ENCODE measurements at regions of chr17 and their contacts with region 1.

Region 1: GRCh38 chr17:6701719-6702118 is 11.4 kb downstream of the SLC13A5 start:
- DNase-seq: peak; percentile 38 to 51 (median 51)
- H3K4me3 ChIP-seq: peak overlapping the region in 1 of 7 experiments; percentile 16
- H3K27ac ChIP-seq: no peak overlapping the region
- H3K4me1 ChIP-seq: peaks cover 0 to 3% (median 0%) of the 10 kb centered on the region in 4 experiments
- H3K27me3 ChIP-seq: peaks cover 0 to 7% (median 0%) of the 10 kb centered on the region in 5 experiments

Region 2: DNA sequence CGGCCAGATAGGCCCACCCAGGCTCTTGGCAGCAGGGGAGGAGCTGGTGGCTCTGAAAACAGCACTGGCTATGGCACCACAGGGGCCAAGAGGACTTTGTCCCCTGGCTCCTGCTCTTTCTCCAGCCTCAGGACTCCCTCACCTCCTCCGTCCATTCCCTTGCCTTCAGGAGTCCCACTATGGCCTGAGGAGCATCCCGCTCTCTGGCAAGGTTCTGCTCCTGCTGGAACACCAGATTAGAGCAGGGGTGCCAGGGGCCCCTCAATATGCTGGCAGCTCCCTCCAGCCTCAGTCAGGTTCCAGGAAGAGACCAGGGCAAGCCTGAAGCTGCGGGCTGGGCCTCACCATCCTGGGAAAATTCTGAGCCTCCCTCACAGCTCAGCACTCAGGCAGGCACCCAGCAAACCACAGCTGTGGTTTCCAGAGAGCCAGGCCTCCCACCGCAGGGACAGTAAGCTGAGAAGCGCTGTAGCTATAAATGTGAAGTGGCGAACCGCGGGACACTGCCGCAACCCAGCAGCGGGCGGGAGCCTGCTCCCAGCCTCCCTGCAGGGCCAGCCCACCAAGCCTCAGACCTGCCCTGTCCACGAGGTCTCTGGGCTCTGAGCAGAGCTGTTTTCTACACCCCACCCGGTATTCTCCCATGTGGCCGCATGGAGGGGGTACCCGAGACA is 24.4 kb before region 1 on chr17:
- CTCF ChIA-PET with region 1: interaction called, 12 read pairs
- POLR2A ChIA-PET with region 1: no interaction called
- DNase-seq: peak; percentile 45 to 78 (median 76)
- H3K4me3 ChIP-seq: no peak overlapping the region
- H3K27ac ChIP-seq: no peak overlapping the region
- H3K4me1 ChIP-seq: peaks cover 0 to 12% (median 11%) of the 10 kb centered on the region in 4 experiments
- H3K27me3 ChIP-seq: peaks cover 0 to 56% (median 29%) of the 10 kb centered on the region in 5 experiments

Region 3: DNA sequence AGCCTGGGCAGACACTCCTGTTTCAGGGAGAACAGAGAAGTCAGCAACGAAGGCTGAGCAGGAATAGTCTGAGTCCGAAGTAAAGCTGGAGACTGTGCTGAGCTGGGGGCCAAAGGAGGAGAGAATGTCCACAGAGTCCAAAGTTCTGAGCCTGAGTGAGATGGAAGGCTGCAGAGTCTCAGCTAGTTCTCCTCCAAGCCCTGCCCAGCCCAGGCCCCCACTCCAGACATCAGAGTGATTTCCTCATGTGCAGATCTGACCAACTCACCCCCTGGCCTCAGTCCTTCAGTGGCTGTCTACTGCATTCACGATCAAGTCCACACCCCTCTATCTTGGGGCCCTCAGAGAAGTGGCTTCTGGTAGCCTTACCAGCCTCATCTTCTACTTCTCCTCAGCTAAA is 10.2 kb before region 1 on chr17:
- CTCF ChIA-PET with region 1: no interaction called
- POLR2A ChIA-PET with region 1: no interaction called
- DNase-seq: no peak
- H3K4me3 ChIP-seq: no peak overlapping the region
- H3K27ac ChIP-seq: no peak overlapping the region
- H3K4me1 ChIP-seq: no peaks in the 10 kb centered on the region
- H3K27me3 ChIP-seq: peaks cover 0 to 16% (median 5%) of the 10 kb centered on the region in 5 experiments

Region 4: DNA sequence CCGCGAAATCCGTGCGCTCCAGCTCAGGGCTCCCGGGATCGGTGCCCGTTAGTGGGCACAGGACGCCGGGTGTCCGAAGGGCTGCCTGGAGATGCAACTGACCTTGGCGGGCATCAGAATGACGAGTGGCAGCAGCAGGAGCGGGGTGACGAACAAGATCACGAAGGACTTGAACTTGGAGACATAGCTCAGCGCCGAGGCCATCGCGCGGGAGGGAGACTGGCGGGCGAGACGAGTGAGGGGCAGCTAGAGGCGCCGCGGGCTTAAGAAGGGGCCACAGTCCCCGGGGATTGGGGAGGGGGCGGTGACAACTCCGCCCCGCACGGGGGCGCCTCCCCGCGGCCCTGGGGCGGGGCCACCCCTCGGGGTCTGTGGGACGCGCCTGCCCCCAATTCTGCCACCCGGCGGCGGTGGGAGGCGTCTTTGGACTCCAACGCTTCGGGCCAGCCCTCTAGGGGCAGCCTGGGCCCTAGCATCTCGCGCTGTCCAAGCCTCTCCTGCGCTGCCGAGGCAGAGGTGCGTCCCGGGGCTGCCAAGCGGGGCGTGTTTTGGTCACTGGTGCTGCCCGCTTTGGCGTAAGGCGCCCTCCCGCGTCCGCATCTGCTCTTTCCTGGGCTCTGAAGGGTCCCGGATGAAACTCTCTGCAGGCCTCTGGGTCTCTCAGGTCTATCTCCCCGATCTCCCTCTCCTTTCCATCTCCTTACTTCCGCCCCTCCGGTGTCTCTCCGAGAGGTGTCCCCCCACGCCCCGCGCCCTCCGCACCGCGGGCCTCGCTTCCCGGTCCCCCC is 11.6 kb after region 1 on chr17 and contains the start of gene SLC13A5:
- CTCF ChIA-PET with region 1: interaction called, 20 read pairs
- POLR2A ChIA-PET with region 1: no interaction called
- DNase-seq: peak; percentile 64 to 80 (median 72)
- H3K4me3 ChIP-seq: peak within 1 kb of the TSS in 5 of 7 experiments; percentile 15 to 70 (median 58)
- H3K27ac ChIP-seq: no peak within 1 kb of the TSS
- H3K4me1 ChIP-seq: peaks cover 0 to 25% (median 18%) of the 10 kb centered on the region in 4 experiments
- H3K27me3 ChIP-seq: peaks cover 0 to 56% (median 33%) of the 10 kb centered on the region in 5 experiments

Region 5: DNA sequence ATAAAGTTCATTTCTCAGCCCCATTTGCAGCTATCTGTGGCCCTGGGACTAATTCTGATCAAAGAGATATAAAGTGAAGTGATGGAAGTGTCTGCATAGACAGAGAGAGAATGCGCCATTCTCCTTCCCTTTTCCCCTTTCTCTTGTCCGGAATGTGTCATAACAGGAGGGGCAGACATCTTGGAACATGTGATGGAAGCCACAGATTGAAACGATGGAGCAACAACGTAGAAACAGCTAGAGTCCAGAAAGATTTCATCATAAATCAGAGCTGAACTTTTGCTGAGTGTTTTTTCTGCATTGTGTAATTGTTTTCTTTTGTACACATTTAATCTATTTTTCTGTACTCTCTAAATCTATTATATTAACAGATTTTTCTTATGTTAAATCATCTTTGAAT is 466.1 kb after region 1 on chr17:
- CTCF ChIA-PET with region 1: no interaction called
- POLR2A ChIA-PET with region 1: no interaction called
- DNase-seq: no peak
- H3K4me3 ChIP-seq: no peak overlapping the region
- H3K27ac ChIP-seq: no peak overlapping the region
- H3K4me1 ChIP-seq: peaks cover 0 to 8% (median 3%) of the 10 kb centered on the region in 4 experiments
- H3K27me3 ChIP-seq: no peaks in the 10 kb centered on the region

Measured in common myeloid progenitor, CD34-positive (primary cell).